Caco-2 (cell line): ENCODE measurements at regions of chr4 and their contacts with region 1.

Region 1: DNA sequence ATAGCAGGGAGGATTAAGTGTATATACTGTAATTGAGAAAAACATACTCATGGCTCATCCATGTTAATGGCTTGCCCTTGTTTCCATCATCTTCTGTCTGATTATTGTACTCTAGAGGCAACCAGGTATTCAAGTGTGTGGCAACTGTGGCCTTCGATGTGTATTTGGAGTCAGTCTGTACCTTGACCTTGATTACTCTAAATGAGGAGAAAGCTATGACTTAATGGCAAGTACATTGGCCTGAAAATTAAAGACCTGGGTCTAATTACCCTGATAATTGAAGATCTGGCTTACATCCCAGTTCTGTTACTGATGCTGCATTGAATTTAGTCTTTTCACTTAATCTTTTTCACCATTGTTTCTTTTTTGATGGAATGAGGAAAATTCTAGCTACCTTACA is 409.2 kb downstream of the CCSER1 start:
- DNase-seq: no peak
- H3K4me3 ChIP-seq: no peak overlapping the region
- H3K4me3 Mint-ChIP-seq: no peak overlapping the region
- H3K27ac Mint-ChIP-seq: no peak overlapping the region
- H3K4me1 ChIP-seq: no peaks in the 10 kb centered on the region
- H3K4me1 Mint-ChIP-seq: peaks cover 11% of the 10 kb centered on the region
- H3K27me3 ChIP-seq: no peaks in the 10 kb centered on the region
- H3K27me3 Mint-ChIP-seq: no peaks in the 10 kb centered on the region
- CTCF ChIP-seq: no peak

Region 2: GRCh38 chr4:90456891-90457290 is 79.5 kb before region 1 on chr4:
- CTCF ChIA-PET with region 1: no interaction called
- POLR2A ChIA-PET with region 1: no interaction called
- intact Hi-C with region 1: no loop called
- DNase-seq: no peak
- H3K4me3 ChIP-seq: no peak overlapping the region
- H3K4me3 Mint-ChIP-seq: no peak overlapping the region
- H3K27ac Mint-ChIP-seq: no peak overlapping the region
- H3K4me1 ChIP-seq: no peaks in the 10 kb centered on the region
- H3K4me1 Mint-ChIP-seq: no peaks in the 10 kb centered on the region
- H3K27me3 ChIP-seq: no peaks in the 10 kb centered on the region
- H3K27me3 Mint-ChIP-seq: no peaks in the 10 kb centered on the region
- CTCF ChIP-seq: no peak

Region 3: DNA sequence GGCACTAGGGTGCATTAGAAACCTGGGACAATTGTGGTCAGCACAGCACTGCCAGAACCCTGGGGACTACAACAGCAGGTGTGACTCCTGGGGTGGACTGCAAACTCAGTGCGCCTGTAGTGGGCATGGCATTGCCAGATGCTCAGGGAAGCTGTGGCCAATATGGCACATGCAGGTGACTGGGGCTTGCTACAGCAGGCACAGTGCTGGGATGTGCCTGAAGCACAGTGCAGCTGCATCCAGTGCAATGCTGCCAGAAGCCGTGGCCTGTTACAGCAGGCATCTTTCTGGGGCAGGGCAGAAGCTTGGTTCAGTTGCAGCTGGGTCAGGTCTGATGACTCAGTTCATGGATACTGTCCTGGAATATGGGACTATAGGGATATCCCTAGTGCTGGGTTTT is 36.6 kb after region 1 on chr4:
- CTCF ChIA-PET with region 1: interaction called, 11 read pairs
- POLR2A ChIA-PET with region 1: no interaction called
- intact Hi-C with region 1: no loop called
- DNase-seq: no peak
- H3K4me3 ChIP-seq: no peak overlapping the region
- H3K4me3 Mint-ChIP-seq: no peak overlapping the region
- H3K27ac Mint-ChIP-seq: no peak overlapping the region
- H3K4me1 ChIP-seq: no peaks in the 10 kb centered on the region
- H3K4me1 Mint-ChIP-seq: no peaks in the 10 kb centered on the region
- H3K27me3 ChIP-seq: no peaks in the 10 kb centered on the region
- H3K27me3 Mint-ChIP-seq: no peaks in the 10 kb centered on the region
- CTCF ChIP-seq: no peak

Region 4: DNA sequence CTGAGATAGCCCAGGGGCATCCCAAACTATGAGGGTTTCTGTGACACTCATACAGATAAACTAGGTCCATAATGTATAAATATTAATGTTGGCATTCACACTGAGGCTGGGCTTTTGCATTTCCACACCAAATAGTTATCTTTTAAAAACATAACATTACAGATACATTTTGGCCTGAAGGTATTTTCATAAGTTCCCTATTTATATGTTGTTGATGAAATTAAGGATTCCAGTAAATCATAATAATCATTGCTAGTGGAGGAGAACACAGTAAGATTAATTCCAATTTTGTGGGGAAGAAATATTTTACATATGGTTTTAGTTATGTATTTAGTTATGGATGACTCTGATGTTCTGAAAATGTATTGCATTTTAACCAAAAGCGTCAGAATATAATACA is 70.4 kb after region 1 on chr4:
- CTCF ChIA-PET with region 1: no interaction called
- POLR2A ChIA-PET with region 1: no interaction called
- intact Hi-C with region 1: no loop called
- DNase-seq: no peak
- H3K4me3 ChIP-seq: no peak overlapping the region
- H3K4me3 Mint-ChIP-seq: no peak overlapping the region
- H3K27ac Mint-ChIP-seq: no peak overlapping the region
- H3K4me1 ChIP-seq: no peaks in the 10 kb centered on the region
- H3K4me1 Mint-ChIP-seq: no peaks in the 10 kb centered on the region
- H3K27me3 ChIP-seq: no peaks in the 10 kb centered on the region
- H3K27me3 Mint-ChIP-seq: no peaks in the 10 kb centered on the region
- CTCF ChIP-seq: no peak